Psoas muscle (tissue), 8 donors: ENCODE measurements at regions of chr15 and their contacts with region 1.

Region 1: GRCh38 chr15:71899674-71900073 is 89.3 kb downstream of the NR2E3 start:
- DNase-seq: no peak
- ATAC-seq: no peak
- H3K4me3 ChIP-seq: no peak overlapping the region
- H3K27ac ChIP-seq: no peak overlapping the region
- H3K4me1 ChIP-seq: no peaks in the 10 kb centered on the region
- H3K27me3 ChIP-seq: no peaks in the 10 kb centered on the region
- CTCF ChIP-seq: no peak

Region 2: GRCh38 chr15:71024657-71025056 is 875.0 kb before region 1 on chr15:
- intact Hi-C with region 1: no loop called
- DNase-seq: no peak
- ATAC-seq: no peak
- H3K4me3 ChIP-seq: no peak overlapping the region
- H3K27ac ChIP-seq: no peak overlapping the region
- H3K4me1 ChIP-seq: no peaks in the 10 kb centered on the region
- H3K27me3 ChIP-seq: no peaks in the 10 kb centered on the region
- CTCF ChIP-seq: no peak

Region 3: GRCh38 chr15:71581406-71581930 is 318.2 kb before region 1 on chr15:
- intact Hi-C with region 1: no loop called
- DNase-seq: no peak
- ATAC-seq: no peak
- H3K4me3 ChIP-seq: no peak overlapping the region
- H3K27ac ChIP-seq: no peak overlapping the region
- H3K4me1 ChIP-seq: no peaks in the 10 kb centered on the region
- H3K27me3 ChIP-seq: no peaks in the 10 kb centered on the region
- CTCF ChIP-seq: no peak

Region 4: DNA sequence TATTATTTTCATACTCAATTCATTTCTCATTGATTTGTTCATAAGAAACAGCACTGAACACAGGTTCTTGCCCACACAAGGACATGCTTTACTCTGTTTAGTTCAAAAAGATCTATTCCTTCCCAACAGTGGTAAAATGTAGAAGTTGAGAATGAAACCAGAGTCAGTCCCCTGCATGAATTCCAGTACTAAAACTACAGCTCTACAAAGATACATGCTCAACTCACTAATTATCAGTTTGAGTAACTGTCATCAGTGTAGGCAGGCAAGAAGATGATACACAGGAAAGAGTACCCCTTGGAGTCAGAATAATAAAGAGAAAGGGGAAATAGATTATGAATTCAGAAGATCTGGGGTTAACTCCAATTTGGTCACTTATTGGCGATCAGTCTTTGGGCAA is 46.1 kb before region 1 on chr15:
- intact Hi-C with region 1: loop called in 1 of 2 experiments (anchors 1 kb)
- DNase-seq: no peak
- ATAC-seq: no peak
- H3K4me3 ChIP-seq: no peak overlapping the region
- H3K27ac ChIP-seq: no peak overlapping the region
- H3K4me1 ChIP-seq: no peaks in the 10 kb centered on the region
- H3K27me3 ChIP-seq: no peaks in the 10 kb centered on the region
- CTCF ChIP-seq: no peak